ENCODE measurements at regions of chr16 and their contacts with region 1.

Region 1: DNA sequence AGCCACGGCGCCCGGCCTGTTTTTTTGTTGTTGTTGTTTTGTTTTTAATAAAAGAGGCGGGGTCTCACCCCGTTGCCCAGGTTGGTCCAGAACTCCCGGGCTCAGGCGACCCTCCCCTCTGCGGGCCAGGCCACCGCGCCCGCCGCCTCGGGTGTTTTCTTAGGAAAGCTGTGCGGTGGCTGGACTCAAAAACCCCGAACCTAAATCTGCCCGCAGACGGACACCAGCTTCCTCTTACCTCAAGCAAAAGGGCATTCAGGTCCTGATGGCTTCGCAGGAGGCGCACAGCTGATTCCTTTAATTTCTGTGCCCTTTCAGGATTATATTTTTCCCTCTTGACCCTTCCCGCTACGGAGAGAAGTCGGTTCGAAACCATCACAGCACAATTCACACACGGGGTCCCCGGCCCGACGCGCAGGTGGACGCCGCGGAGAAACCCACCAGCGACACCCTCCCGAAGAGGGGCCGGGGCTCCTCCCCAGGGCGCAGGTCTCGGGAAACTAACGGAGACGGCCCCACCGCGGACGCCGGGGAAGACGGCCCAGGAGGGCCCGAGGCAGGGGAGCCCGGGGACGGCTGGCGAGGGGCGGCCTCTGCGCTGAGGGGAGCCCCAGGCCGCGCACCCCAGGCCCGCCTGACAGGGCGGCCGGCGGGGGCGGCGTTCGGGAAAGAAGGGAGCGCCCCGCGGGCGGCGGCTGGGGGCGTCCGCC is 653 bp downstream of the FANCA start:
- DNase-seq: no peak
- H3K4me3 Mint-ChIP-seq: peak overlapping the region; percentile 86
- H3K27ac Mint-ChIP-seq: peak overlapping the region; percentile 58
- H3K4me1 Mint-ChIP-seq: peaks cover 26% of the 10 kb centered on the region
- H3K27me3 Mint-ChIP-seq: no peaks in the 10 kb centered on the region

Region 2: DNA sequence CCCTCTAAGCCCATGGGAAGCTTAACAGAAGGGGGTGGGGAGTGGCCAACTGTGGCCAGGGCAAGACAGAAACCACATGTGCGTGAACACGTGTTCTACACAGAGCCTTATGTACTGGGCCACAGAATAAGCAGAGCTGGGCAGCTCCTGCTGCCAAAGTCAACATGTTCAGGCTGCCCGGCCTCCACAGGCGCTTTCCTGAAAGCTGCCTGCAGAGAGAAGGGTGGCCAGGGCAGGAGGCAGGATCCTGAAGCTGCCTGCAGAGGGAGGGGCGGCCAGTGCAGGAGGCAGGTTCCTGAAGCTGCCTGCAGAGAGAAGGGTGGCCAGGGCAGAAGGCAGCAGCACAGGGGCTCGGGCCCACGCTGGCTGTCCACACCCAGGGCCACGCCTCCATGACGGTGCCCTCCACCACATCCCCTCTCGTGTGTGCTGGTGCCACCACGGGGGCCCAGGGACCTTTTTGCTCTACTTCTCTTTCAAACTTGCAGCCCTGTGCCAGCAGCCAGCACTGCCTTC is 404.9 kb before region 1 on chr16:
- intact Hi-C with region 1: no loop called
- DNase-seq: no peak
- H3K4me3 Mint-ChIP-seq: peak overlapping the region; percentile 66
- H3K27ac Mint-ChIP-seq: peak overlapping the region; percentile 86
- H3K4me1 Mint-ChIP-seq: peaks cover 69% of the 10 kb centered on the region
- H3K27me3 Mint-ChIP-seq: no peaks in the 10 kb centered on the region

Region 3: GRCh38 chr16:89534252-89534756 is 281.5 kb before region 1 on chr16:
- intact Hi-C with region 1: no loop called
- DNase-seq: peak; percentile 25
- H3K4me3 Mint-ChIP-seq: no peak overlapping the region
- H3K27ac Mint-ChIP-seq: peak overlapping the region; percentile 77
- H3K4me1 Mint-ChIP-seq: peaks cover 20% of the 10 kb centered on the region
- H3K27me3 Mint-ChIP-seq: no peaks in the 10 kb centered on the region

Region 4: DNA sequence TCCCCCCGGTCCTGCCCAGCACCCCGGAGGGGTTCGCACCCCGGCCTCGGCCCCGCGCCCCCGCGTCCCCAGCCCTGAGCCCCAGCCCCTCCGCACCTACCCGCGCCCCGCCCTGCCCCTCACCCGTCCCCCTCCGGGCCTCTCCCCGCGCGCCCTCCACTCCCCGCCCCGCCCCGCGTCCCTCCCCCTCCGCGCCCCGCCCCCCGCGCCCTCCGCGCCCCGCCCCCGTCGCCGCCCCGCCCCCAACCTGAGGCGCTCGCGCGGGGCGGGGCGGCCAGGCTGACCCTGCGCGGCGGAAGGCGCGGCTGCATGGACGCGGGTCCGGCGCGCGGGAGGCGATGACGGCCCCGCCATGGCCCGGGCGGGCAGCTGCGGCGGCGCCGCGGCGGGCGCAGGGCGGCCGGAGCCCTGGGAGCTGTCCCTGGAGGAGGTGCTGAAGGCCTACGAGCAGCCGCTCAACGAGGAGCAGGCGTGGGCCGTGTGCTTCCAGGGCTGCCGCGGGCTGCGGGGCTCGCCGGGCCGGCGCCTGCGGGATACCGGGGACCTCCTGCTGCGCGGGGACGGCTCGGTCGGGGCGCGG is 12.5 kb after region 1 on chr16 and contains the start of gene SPIRE2:
- intact Hi-C with region 1: loop called (anchors 1 kb)
- DNase-seq: peak; percentile 76
- H3K4me3 Mint-ChIP-seq: peak within 1 kb of the TSS; percentile 75
- H3K27ac Mint-ChIP-seq: no peak within 1 kb of the TSS
- H3K4me1 Mint-ChIP-seq: no peaks in the 10 kb centered on the region
- H3K27me3 Mint-ChIP-seq: peaks cover 40% of the 10 kb centered on the region
- total RNA-seq, gene SPIRE2: 1.5 and 2.7 TPM in 2 replicates

Region 5: GRCh38 chr16:89860747-89861304 is 45.0 kb after region 1 on chr16:
- intact Hi-C with region 1: loop called (anchors 1 kb)
- DNase-seq: peak; percentile 71
- H3K4me3 Mint-ChIP-seq: no peak overlapping the region
- H3K27ac Mint-ChIP-seq: no peak overlapping the region
- H3K4me1 Mint-ChIP-seq: peaks cover 33% of the 10 kb centered on the region
- H3K27me3 Mint-ChIP-seq: no peaks in the 10 kb centered on the region

Region 6: DNA sequence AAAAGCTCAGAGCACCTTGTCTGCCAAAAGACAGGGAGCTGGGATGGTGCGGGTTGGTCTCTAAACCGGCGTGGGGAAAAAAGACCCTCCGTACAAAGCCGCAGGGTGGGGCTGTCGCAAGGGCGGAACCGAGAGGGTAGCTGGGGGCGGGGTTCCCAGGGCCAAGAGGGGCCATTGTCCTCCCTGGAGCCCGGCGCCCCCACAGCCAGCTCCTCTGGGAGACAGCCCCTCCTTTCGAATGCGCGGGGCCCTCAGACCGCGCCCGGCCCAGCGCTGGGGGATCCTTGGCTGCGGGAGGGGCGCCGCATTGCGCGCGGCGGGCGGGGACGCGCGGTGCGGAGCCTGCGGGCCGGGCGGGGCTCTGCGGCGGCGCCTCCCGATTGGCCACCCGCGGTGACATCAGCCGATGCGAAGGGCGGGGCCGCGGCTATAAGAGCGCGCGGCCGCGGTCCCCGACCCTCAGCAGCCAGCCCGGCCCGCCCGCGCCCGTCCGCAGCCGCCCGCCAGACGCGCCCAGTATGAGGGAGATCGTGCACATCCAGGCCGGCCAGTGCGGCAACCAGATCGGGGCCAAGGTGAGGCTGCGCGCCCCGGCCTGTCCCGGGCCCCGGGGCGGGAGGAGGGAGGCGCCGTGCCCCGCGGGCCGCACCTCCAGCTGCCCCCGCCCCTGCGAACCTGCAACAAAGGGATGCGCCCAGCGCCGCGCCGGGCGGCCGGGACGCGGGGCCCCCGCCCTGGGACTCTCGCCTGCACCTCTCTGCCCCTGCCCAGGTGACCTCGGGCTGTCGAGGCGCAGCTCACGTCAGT is 107.3 kb after region 1 on chr16 and contains the start of gene TUBB3:
- intact Hi-C with region 1: loop called (anchors 2 kb)
- DNase-seq: peak; percentile 69
- H3K4me3 Mint-ChIP-seq: peak within 1 kb of the TSS; percentile 83
- H3K27ac Mint-ChIP-seq: peak within 1 kb of the TSS; percentile 15
- H3K4me1 Mint-ChIP-seq: peaks cover 7% of the 10 kb centered on the region
- H3K27me3 Mint-ChIP-seq: peaks cover 29% of the 10 kb centered on the region
- total RNA-seq, gene TUBB3: 2.0 and 2.6 TPM in 2 replicates

Measured in activated T-helper 1 cell treated with anti-CD3 and anti-CD28 coated beads, Interleukin-12 subunit alpha, Interleukin-12 subunit beta, Interleukin-2, Interleukin-4 antibody, amounts not matched to agents 30 ng/mL and 10 ng/mL and 1 ng/mL, durations not matched to agents 14 hours and 24 hours and 36 hours (primary cell).